ENCODE measurements at regions of chr5 and their contacts with region 1.

Region 1: GRCh38 chr5:114649878-114650277 is 288.0 kb downstream of the KCNN2 start:
- DNase-seq: no peak
- ATAC-seq: no peak
- H3K4me3 ChIP-seq: no peak overlapping the region
- H3K27ac ChIP-seq: no peak overlapping the region
- H3K4me1 ChIP-seq: no peaks in the 10 kb centered on the region
- H3K27me3 ChIP-seq: no peaks in the 10 kb centered on the region; a peak in 1 of 5 replicates
- CTCF ChIP-seq: no peak
- EP300 ChIP-seq: no peak
- POLR2A ChIP-seq: no peak
- RAD21 ChIP-seq: no peak

Region 2: DNA sequence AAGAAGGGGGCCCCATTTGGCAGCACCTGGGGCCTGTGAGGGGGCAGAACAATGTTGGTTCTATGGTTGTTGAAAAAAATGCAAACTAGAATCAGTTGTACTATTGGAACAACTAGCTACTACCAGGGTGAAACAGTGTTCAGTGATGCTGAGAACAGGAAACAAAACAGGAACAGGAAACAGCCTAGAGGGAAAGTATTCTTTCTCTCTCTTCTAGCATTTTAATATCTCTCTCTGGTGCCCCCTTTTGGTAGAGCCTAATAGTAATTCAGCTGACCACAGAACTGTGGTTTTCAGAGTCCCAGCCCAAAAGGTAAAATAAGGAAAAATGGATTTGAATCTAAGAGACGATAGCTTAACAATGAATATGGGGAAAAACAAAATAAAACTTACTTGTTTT is 426.0 kb before region 1 on chr5:
- CTCF ChIA-PET with region 1: no interaction called
- POLR2A ChIA-PET with region 1: no interaction called
- in situ Hi-C with region 1: no loop called
- intact Hi-C with region 1: loop called (anchors 5 kb)
- DNase-seq: peak; percentile 21
- ATAC-seq: no peak
- H3K4me3 ChIP-seq: no peak overlapping the region
- H3K27ac ChIP-seq: no peak overlapping the region
- H3K4me1 ChIP-seq: no peaks in the 10 kb centered on the region
- H3K27me3 ChIP-seq: no peaks in the 10 kb centered on the region
- CTCF ChIP-seq: peak; percentile 26; the same call in 1 of the 2 replicates
- EP300 ChIP-seq: no peak
- POLR2A ChIP-seq: no peak
- RAD21 ChIP-seq: no peak